ENCODE measurements at regions of chr13 and their contacts with region 1.

Region 1: GRCh38 chr13:51286135-51287002 is 53.1 kb upstream of the SERPINE3 start:
- DNase-seq: peak; percentile 74 to 92
- H3K4me3 ChIP-seq: no peak overlapping the region
- H3K4me1 ChIP-seq: peaks cover 11% of the 10 kb centered on the region; the same call in 1 of the 2 replicates
- H3K27me3 ChIP-seq: no peaks in the 10 kb centered on the region

Region 2: DNA sequence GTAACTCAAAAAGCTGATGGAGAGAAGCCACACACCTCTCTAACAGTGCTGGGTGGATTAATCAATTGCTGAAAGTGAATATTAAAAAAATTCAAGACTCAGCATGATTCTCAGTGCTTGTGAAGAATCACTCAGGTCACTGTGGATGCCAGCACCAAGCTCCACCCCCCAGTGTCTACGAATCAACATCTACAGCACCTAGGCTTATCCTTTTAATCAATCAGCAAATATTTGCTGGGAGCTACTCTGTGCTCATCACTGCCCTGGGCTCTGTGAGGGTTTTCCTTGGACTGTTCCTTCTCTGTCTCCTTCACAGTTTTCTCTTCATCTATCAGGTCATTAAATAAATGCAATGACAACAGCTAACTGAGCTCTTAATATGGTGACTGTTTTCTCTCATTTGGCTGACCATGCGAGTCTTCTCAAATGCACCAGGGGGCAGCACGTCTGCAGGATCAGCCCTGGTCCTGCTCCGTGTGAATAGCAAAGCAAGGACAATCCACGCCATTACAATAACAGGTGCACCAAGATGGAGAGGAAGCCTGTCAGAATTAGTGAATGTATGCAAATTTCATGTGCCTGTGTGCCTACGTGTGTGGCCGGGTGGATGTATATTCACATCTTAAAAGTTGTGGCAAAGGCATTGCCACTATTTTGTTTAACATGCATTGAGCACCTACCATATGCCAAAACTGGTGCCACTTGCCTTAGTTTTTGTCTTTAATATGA is 160.7 kb before region 1 on chr13:
- in situ Hi-C with region 1: loop called (anchors 10 kb)
- DNase-seq: peak; percentile 78 to 79
- H3K4me3 ChIP-seq: no peak overlapping the region
- H3K4me1 ChIP-seq: no peaks in the 10 kb centered on the region
- H3K27me3 ChIP-seq: no peaks in the 10 kb centered on the region

Region 3: GRCh38 chr13:51148952-51149573 is 137.3 kb before region 1 on chr13:
- in situ Hi-C with region 1: loop called (anchors 5 kb)
- DNase-seq: peak; percentile 59 to 67
- H3K4me3 ChIP-seq: no peak overlapping the region
- H3K4me1 ChIP-seq: peaks cover 11% of the 10 kb centered on the region
- H3K27me3 ChIP-seq: no peaks in the 10 kb centered on the region

Region 4: DNA sequence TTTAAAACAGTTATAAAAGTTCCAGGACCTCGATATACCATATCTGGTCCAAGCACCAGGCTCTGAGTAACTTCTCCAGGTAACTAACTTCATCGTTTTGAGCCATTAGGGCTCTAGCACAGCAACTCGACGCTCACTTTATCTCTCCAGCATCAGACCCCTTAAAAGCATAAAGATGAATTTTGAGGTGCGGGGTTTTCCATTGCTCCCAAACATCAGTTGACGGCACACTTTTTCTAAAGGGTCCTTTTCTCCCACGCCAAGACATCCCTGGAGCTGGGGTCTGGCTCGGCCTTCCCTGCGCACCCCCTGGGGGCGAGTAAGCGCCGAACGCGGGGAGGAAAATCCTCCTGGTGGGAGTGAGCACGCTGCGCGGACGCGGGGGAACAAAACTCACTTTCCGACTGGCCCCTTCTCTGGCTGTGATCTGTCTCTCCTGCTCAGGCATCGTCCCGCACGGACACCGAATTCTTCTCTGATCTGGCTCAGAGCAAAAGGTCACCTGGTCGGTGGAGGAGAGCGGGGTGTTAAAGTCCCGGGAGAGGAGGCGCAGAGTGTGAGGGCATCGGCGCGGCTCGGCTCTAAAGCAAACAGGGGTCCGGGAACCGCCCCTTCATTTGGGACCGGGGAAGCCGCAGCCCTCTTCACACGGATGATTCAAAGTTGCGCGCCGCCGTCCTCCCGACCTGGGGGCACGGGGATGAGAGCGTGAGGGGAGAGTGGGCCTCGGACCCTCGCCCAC is 724.7 kb after region 1 on chr13 and contains the start of gene ATP7B:
- in situ Hi-C with region 1: no loop called
- DNase-seq: peak in 1 of 2 experiments; percentile 59
- H3K4me3 ChIP-seq: peak within 1 kb of the TSS; percentile 75
- H3K4me1 ChIP-seq: peaks cover 12% of the 10 kb centered on the region
- H3K27me3 ChIP-seq: no peaks in the 10 kb centered on the region

Measured in HAP-1 (cell line).